Left cardiac atrium (tissue), 4 donors: ENCODE measurements at regions of chr17 and their contacts with region 1.

Region 1: GRCh38 chr17:38485146-38485468 is 56.8 kb downstream of the ARHGAP23 start:
- DNase-seq: no peak
- ATAC-seq: no peak

Region 2: GRCh38 chr17:38351412-38352222 is 133.5 kb before region 1 on chr17 and contains the start of gene SOCS7:
- intact Hi-C with region 1: loop called in 1 of 2 experiments (anchors 10 kb)
- DNase-seq: peak; percentile 96
- ATAC-seq: peak; percentile 96 to 97
- total RNA-seq, gene SOCS7: 11.2 to 11.4 TPM

Region 3: DNA sequence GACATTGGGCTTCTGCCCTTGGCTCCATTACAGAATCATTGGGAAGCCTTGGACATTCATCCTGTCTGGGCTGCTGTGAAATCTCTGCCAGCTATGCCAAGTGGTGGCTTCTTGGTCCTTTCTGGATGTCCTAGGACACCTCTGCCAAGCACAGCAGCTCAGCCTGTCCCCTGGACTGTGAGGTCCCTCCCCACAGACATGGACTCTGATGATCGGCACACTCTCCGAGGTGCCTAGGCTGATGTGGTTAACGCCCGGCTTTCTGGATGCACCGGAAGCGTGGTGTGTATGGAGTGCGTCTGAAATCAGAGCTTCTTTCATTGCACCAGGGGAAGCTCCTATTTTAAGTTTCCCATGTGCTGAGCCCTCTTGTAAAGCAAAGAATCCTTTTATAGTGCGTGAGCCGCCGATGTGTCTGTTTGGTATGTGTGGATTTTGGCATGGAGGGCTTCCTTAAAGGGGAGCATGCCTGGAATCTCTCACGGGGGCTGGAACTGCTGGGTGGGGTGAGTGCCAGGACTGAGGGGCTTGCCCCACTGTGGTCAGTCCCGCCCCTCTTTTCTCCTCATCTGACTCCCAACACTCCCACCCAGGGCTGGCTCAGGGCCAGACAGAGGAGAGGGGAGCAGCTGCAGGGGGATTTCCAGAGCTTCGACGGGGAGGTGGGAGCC is 63.8 kb before region 1 on chr17:
- intact Hi-C with region 1: loop called in 1 of 2 experiments (anchors 5 kb)
- DNase-seq: peak; percentile 42
- ATAC-seq: peak; percentile 10 to 35

Region 4: GRCh38 chr17:38444151-38444550 is 41.0 kb before region 1 on chr17:
- intact Hi-C with region 1: loop called in 1 of 2 experiments (anchors 5 kb)
- DNase-seq: peak; percentile 82
- ATAC-seq: peak; percentile 70 to 75

Region 5: GRCh38 chr17:38667099-38667786 is 182.1 kb after region 1 on chr17:
- intact Hi-C with region 1: loop called in 1 of 2 experiments (anchors 5 kb)
- DNase-seq: peak; percentile 73
- ATAC-seq: peak; percentile 64 to 70

Region 6: GRCh38 chr17:38912221-38912813 is 427.2 kb after region 1 on chr17:
- intact Hi-C with region 1: no loop called
- DNase-seq: peak; percentile 70
- ATAC-seq: peak; percentile 44 to 72